ENCODE measurements at regions of chr20 and their contacts with region 1.

Region 1: DNA sequence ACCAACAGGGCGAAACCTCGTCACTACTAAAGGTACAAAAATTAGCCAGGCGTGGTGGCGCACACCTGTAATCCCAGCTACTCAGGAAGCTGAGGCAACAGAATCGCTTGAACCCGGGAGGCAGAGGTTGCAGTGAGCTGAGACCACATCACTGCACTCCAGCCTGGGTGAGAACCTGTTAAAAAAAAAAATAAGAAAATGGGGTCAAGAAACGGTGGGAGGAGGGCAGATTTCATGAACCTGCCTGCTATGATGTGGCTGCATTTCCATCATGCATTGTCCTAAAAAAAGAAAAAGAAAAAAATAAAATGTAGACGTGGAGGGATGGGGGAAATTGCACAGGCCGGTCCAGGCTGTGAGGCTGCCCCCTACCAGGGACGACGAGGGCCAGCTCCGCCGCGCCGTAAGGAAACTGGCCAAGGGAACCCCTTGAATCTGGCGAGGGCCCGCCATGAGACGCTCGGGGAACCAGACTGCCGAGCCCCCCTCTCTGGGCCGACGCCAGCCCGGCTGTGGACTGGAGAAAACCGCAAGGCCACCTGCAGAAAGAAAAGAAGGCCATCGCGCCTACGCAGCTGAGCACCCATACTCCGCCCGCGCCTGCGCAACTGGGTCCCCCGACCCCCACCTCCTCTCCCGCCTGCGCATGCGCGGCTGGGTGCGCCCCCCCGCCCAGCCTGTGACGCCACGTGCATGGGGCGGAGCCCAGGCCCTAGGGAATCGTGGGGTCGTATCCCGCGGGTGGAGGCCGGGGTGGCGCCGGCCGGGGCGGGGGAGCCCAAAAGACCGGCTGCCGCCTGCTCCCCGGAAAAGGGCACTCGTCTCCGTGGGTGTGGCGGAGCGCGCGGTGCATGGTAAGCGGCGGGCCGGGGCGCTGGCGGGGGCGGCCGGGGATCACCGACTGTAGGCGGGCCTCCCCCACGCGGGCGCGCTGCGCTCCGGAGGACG is at the start of gene ENTPD6:
- DNase-seq: peak; percentile 97
- total RNA-seq, gene ENTPD6: 48.5 to 51.0 TPM

Region 2: DNA sequence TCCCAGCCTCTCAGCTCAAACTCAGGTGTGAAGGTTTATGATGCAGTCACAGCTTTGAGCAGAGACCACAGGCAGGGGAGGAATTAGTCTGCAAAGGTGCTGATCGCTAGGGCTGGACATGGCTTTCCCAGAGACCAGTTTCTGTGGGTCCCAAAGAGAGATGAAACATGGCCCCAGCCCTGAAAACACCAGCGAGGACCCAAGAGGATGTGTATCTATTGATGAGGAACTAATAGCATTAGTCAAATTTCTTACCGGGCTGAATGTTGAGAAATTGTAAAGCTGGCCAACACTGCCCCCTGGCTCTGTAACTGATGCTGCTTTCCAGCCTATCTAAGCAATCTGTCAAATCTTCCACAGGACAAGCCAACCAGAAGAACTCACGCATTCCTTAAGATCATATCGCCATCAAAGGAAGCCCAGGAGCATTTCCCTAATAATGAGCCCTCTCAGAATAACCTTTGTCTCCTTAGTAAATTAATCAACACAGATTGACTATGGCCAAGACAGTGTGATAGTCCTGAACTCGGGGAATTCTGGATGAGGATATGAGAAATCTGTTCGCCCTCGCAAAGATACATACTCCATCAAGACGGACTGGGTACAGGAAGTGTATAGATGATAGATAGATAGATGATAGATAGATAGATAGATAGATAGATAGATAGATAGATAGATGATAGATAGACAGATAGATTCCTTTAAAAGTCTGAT is 129.5 kb before region 1 on chr20:
- intact Hi-C with region 1: loop called in 1 of 2 experiments (anchors 10 kb)
- DNase-seq: peak; percentile 84

Region 3: GRCh38 chr20:25160467-25160866 is 34.8 kb before region 1 on chr20:
- intact Hi-C with region 1: loop called in 1 of 2 experiments (anchors 2 kb)
- DNase-seq: no peak

Region 4: GRCh38 chr20:25247956-25248785 is 52.9 kb after region 1 on chr20 and contains the start of gene PYGB:
- intact Hi-C with region 1: loop called in 1 of 2 experiments (anchors 5 kb)
- DNase-seq: peak; percentile 95
- total RNA-seq, gene PYGB: 132 to 155 TPM

Region 5: DNA sequence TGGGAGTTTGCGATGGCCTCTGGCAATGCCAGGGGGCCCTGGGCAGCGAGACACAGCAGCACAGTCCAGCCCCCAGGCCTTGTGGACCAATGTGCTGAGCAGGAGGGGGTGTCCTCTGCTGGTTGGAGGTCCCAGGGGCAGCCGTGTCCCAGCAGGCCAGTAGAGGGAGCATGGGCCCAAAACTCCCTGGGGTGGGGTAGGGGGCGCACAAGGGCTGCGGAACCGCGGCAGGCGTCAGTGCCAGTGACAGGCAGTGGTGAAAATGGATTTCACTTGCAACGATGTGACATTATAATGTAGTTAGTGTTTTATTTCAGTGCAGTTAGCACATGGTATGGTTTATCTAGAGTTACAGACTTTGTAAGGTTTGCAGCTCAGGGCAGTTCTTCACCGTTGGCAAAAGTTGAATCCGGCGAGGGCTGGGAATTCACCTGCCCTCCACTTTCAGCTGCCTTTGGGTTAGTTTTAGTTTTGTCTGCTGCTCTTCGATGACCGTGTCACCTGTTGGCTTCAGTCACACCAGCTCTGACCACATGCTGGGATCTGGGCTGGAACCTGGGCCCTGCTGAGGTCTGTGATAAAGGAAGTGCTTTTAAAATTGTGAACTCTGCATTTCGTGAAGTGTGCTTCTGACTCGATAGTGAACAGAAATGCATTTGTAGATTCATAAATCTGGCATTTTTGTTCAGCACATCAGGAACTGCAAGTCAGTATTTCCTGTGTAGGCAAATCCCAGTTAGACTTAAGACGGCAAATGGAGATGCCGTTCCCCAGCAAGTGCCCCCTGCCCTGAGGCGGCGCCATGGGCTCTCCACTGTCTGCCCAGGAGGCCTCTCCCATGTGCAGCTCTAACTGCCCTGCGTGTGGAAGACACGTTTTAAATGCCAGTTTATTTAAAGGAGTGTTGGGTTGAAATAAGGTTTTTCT is 99.4 kb after region 1 on chr20:
- intact Hi-C with region 1: loop called in 1 of 2 experiments (anchors 10 kb)
- DNase-seq: no peak

Measured in posterior vena cava (tissue), 2 donors.